ENCODE measurements at regions of chr13 and their contacts with region 1.

Region 1: GRCh38 chr13:97221989-97222700 is at the start of gene MBNL2:
- DNase-seq: peak; percentile 84 to 94 (median 91)
- ATAC-seq: peak; percentile 76 to 90 (median 86)
- H3K4me3 ChIP-seq: peak within 1 kb of the TSS; percentile 35 to 67 (median 47)
- H3K27ac ChIP-seq: peak within 1 kb of the TSS; percentile 90 to 99 (median 96)
- H3K4me1 ChIP-seq: peaks cover 14 to 16% (median 16%) of the 10 kb centered on the region in 3 donors
- H3K27me3 ChIP-seq: no peaks in the 10 kb centered on the region
- CTCF ChIP-seq: no peak
- total RNA-seq, gene MBNL2: 32.5 to 66.5 (median 46.4) TPM

Region 2: DNA sequence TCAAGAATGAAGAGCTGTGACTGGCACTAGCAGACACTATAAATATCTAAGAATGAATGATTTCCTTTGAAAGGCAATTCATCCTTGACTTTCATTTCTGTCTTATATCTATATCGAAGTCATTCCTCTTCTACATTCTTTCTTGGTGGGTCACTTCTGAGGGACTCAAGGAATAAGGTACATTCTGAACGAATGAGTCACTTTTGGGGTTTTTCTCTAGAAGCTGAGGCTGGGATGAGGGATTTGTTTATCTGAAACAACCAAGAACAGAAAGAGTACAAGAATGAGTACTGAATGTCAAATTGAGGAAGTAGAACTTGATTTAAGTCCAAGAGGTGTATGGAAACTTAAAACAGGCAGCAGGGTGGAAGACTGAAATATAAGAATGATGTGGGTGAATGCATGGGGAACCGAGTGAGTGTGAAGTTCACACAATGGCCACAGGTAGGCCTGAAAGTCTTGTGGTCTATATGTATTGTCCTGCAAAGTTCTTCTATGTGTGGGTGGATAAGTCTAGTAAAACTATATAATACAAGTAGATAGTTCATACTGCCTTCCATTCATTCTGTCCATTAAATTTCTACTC is 571.8 kb before region 1 on chr13:
- intact Hi-C with region 1: no loop called
- DNase-seq: no peak
- ATAC-seq: no peak
- H3K4me3 ChIP-seq: no peak overlapping the region
- H3K27ac ChIP-seq: no peak overlapping the region
- H3K4me1 ChIP-seq: peaks cover 0 to 3% (median 0%) of the 10 kb centered on the region in 3 donors
- H3K27me3 ChIP-seq: no peaks in the 10 kb centered on the region
- CTCF ChIP-seq: no peak

Region 3: DNA sequence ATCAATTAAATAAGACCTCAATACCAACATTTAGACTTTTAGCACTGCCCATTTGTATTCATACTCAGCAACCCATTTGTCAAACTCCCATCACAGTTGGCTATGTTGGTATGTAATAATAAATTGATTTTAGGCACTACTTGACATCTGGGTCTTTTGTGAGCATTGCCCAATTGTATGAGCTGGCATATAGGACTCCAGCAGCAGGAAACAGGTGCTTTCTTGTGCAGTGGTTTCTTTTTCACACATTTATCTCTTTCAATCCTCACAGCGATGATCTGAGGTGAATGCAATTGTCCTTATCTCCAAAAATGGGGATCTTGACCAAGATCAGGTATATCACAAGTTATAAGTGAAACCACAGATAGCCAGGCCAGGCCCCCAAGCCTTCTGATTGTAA is 130.9 kb before region 1 on chr13:
- intact Hi-C with region 1: no loop called
- DNase-seq: no peak
- ATAC-seq: no peak
- H3K4me3 ChIP-seq: no peak overlapping the region
- H3K27ac ChIP-seq: no peak overlapping the region
- H3K4me1 ChIP-seq: no peaks in the 10 kb centered on the region
- H3K27me3 ChIP-seq: no peaks in the 10 kb centered on the region
- CTCF ChIP-seq: no peak

Region 4: GRCh38 chr13:97339019-97339987 is 117.2 kb after region 1 on chr13:
- intact Hi-C with region 1: loop called in 2 of 3 experiments (anchors 10 kb)
- DNase-seq: peak in 2 of 6 donors; percentile 38 to 42
- ATAC-seq: peak in 3 of 4 donors; percentile 37 to 58 (median 41)
- H3K4me3 ChIP-seq: no peak overlapping the region
- H3K27ac ChIP-seq: peak overlapping the region in 2 of 4 donors; percentile 49 to 64
- H3K4me1 ChIP-seq: peaks cover 12 to 28% (median 23%) of the 10 kb centered on the region in 3 donors
- H3K27me3 ChIP-seq: no peaks in the 10 kb centered on the region
- CTCF ChIP-seq: no peak